Caco-2 (cell line): ENCODE measurements at regions of chr15 and their contacts with region 1.

Region 1: DNA sequence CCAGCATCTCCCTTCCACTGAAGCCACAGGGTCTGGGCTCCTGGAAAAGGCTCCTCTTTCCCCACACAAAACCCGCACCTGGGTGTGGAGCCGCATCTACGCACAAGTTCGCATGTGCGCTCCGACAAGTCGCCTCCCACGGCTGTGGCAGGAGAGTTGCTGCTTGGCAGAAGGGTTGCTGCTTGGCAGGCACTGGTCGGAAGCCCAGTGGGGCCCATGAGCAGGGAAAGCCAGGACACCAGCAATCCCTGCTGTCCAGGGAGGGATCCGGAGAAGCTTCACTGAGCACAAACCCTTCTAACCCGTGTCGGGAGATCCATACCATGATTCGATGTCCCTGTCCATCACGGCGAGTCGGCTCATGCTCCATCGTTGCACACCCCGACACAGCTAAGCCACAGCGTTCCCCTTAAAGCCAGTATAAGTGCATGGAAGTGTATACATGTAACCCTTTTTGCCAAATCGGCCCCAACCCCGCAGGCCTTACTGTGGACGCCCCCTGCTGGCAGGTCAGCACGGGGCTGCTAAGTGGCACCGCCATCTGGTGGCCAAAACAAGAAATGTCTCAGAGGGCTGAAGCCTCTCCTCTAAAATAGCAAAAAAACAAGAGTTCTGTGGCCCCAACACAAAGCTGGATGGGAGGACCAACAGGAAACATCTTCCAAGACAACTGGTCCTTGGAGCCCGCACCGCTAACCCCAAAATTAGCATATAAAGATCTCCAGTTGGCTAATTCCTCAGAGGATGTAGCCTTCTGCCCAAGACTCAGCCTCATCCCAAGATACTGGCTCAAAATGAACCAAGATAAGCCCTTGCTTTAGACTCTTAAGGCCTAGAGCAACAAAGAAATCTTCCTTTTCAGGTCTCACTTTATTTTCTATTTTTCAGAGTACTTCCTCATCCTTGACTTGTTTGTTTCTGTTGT is 8.3 kb downstream of the ANKRD63 start:
- DNase-seq: peak; percentile 74 to 89
- H3K4me3 ChIP-seq: no peak overlapping the region
- H3K4me3 Mint-ChIP-seq: no peak overlapping the region
- H3K27ac Mint-ChIP-seq: no peak overlapping the region
- H3K4me1 ChIP-seq: no peaks in the 10 kb centered on the region; the same call in 1 of the 2 replicates
- H3K4me1 Mint-ChIP-seq: no peaks in the 10 kb centered on the region
- H3K27me3 ChIP-seq: no peaks in the 10 kb centered on the region
- H3K27me3 Mint-ChIP-seq: no peaks in the 10 kb centered on the region
- CTCF ChIP-seq: peak; percentile 100

Region 2: GRCh38 chr15:38745126-38745525 is 1529.5 kb before region 1 on chr15:
- CTCF ChIA-PET with region 1: no interaction called
- POLR2A ChIA-PET with region 1: no interaction called
- intact Hi-C with region 1: no loop called
- DNase-seq: no peak
- H3K4me3 ChIP-seq: no peak overlapping the region
- H3K4me3 Mint-ChIP-seq: no peak overlapping the region
- H3K27ac Mint-ChIP-seq: no peak overlapping the region
- H3K4me1 ChIP-seq: no peaks in the 10 kb centered on the region
- H3K4me1 Mint-ChIP-seq: no peaks in the 10 kb centered on the region
- H3K27me3 ChIP-seq: no peaks in the 10 kb centered on the region
- H3K27me3 Mint-ChIP-seq: peaks cover 14% of the 10 kb centered on the region
- CTCF ChIP-seq: no peak

Region 3: GRCh38 chr15:40044717-40045571 is 229.7 kb before region 1 on chr15:
- CTCF ChIA-PET with region 1: interaction called, 6 read pairs
- POLR2A ChIA-PET with region 1: no interaction called
- intact Hi-C with region 1: loop called (anchors 1 kb)
- DNase-seq: peak; percentile 83 to 89
- H3K4me3 ChIP-seq: peak overlapping the region; percentile 19
- H3K4me3 Mint-ChIP-seq: peak overlapping the region; percentile 71
- H3K27ac Mint-ChIP-seq: peak overlapping the region; percentile 82
- H3K4me1 ChIP-seq: peaks cover 9% of the 10 kb centered on the region; the same call in 1 of the 2 replicates
- H3K4me1 Mint-ChIP-seq: peaks cover 22% of the 10 kb centered on the region
- H3K27me3 ChIP-seq: no peaks in the 10 kb centered on the region
- H3K27me3 Mint-ChIP-seq: no peaks in the 10 kb centered on the region
- CTCF ChIP-seq: peak; percentile 88

Region 4: GRCh38 chr15:40238532-40239403 is 35.8 kb before region 1 on chr15 and contains the start of gene PAK6:
- CTCF ChIA-PET with region 1: interaction called, 16 read pairs
- POLR2A ChIA-PET with region 1: no interaction called
- intact Hi-C with region 1: no loop called
- DNase-seq: peak; percentile 77 to 80
- H3K4me3 ChIP-seq: peak within 1 kb of the TSS; percentile 33
- H3K4me3 Mint-ChIP-seq: peak within 1 kb of the TSS; percentile 58
- H3K27ac Mint-ChIP-seq: peak within 1 kb of the TSS; percentile 51
- H3K4me1 ChIP-seq: peaks cover 7% of the 10 kb centered on the region
- H3K4me1 Mint-ChIP-seq: no peaks in the 10 kb centered on the region
- H3K27me3 ChIP-seq: no peaks in the 10 kb centered on the region
- H3K27me3 Mint-ChIP-seq: no peaks in the 10 kb centered on the region
- CTCF ChIP-seq: no peak
- total RNA-seq, gene PAK6: 19.9 and 20.7 TPM in 2 replicates

Region 5: DNA sequence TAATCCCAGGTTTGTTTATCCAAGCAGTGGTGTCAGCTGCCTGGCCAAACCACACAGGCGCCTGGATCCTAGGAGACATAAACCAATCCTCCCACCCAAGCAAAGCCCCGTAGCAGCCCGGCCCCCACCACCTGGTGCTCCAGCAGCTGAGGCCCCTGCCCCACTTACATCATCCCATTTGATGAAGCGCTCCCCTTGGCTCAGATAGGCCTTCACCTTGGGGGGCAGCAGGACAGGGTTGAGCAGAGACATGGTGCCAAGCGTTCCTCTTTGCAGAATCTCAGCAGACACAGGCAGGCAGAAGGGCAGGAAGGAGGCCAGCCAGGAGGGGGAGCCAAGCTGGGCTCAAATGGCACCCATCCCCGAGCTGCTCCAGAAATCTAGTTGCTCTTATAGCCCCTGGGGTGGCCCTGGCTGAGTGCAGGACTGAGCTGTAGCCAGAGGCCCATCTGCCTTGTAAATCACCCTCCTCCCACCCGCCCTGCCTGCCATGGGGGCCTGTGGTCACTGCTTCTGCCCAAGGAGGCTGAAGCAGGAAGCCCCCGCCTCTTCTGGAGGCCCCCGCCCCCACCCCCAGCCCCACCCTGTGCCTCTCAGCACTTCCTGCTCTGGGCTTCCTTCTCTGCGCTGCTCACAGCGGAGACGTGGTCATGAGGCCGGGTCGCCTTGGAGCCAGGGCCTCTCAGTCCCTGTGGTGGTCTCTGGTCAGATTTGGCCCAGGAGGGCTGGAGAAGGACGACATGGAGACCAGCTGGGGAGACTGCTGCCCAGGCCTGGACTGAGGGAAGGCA is 33.0 kb after region 1 on chr15 and contains the start of gene PLCB2:
- CTCF ChIA-PET with region 1: interaction called, 34 read pairs
- POLR2A ChIA-PET with region 1: no interaction called
- intact Hi-C with region 1: loop called (anchors 1 kb)
- DNase-seq: peak in 1 of 2 experiments; percentile 36
- H3K4me3 ChIP-seq: no peak within 1 kb of the TSS
- H3K4me3 Mint-ChIP-seq: no peak within 1 kb of the TSS
- H3K27ac Mint-ChIP-seq: no peak within 1 kb of the TSS
- H3K4me1 ChIP-seq: no peaks in the 10 kb centered on the region
- H3K4me1 Mint-ChIP-seq: no peaks in the 10 kb centered on the region
- H3K27me3 ChIP-seq: no peaks in the 10 kb centered on the region
- H3K27me3 Mint-ChIP-seq: peaks cover 3% of the 10 kb centered on the region
- CTCF ChIP-seq: peak in 1 of 2 experiments; percentile 28
- total RNA-seq, gene PLCB2: 4.0 and 4.7 TPM in 2 replicates

Region 6: DNA sequence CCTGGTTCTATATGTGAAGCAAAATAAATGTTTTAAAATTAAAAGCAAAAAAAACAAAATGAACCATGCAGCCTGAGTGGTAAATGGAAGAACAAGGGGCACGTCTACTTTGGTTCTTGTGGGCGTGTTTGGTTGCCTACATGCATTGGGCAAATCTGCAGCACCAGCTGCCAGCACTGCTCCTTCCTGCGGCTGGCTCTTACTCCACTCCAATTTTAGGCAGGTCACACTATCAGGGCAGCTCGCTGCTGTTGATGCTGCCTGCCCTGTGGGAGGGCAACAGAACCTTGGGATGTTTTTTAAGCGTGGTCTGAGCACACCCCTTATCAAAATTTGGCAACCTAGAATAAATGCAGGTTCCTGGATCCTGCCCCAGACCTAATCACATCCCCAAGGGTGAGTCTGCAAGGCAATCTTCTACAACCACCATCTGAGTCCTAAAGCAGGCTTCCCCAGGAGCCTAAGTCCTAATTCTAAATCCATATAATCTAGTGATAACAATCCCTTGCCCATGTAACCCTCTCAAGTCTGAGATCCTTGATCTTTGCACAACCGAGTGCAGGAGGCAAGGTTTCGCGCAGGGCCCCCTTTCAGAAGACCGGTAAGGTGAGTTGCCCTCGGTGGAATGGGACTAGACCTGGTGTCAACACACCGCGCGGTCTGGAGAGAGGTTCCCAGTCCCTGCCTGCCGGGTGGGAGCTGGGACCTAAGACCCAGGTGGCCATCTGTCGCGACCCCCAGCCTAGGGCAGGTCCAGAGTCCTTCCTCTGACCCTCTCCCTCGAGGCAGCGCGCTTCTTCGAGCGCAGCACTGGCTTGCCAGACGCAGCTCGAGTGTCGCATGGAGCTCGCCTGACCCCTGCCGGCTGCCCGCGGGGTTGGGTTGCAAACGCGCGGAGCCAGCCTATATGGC is 146.9 kb after region 1 on chr15:
- CTCF ChIA-PET with region 1: interaction called, 3 read pairs
- POLR2A ChIA-PET with region 1: no interaction called
- intact Hi-C with region 1: loop called (anchors 1 kb)
- DNase-seq: peak; percentile 79 to 87
- H3K4me3 ChIP-seq: peak overlapping the region; percentile 35
- H3K4me3 Mint-ChIP-seq: peak overlapping the region; percentile 9
- H3K27ac Mint-ChIP-seq: no peak overlapping the region
- H3K4me1 ChIP-seq: peaks cover 5% of the 10 kb centered on the region; the same call in 1 of the 2 replicates
- H3K4me1 Mint-ChIP-seq: no peaks in the 10 kb centered on the region
- H3K27me3 ChIP-seq: no peaks in the 10 kb centered on the region
- H3K27me3 Mint-ChIP-seq: no peaks in the 10 kb centered on the region
- CTCF ChIP-seq: peak; percentile 95 to 96

Region 7: GRCh38 chr15:41695750-41696426 is 1421.3 kb after region 1 on chr15:
- CTCF ChIA-PET with region 1: no interaction called
- POLR2A ChIA-PET with region 1: no interaction called
- intact Hi-C with region 1: no loop called
- DNase-seq: peak in 1 of 2 experiments; percentile 24
- H3K4me3 ChIP-seq: no peak overlapping the region
- H3K4me3 Mint-ChIP-seq: no peak overlapping the region
- H3K27ac Mint-ChIP-seq: no peak overlapping the region
- H3K4me1 ChIP-seq: 0 out of 2 replicates have a peak, but pooled peaks cover 5% of the 10 kb centered on the region
- H3K4me1 Mint-ChIP-seq: peaks cover 9% of the 10 kb centered on the region
- H3K27me3 ChIP-seq: no peaks in the 10 kb centered on the region
- H3K27me3 Mint-ChIP-seq: no peaks in the 10 kb centered on the region
- CTCF ChIP-seq: peak; percentile 14 to 19